Activated CD4-positive, alpha-beta memory T cell treated with anti-CD3 and anti-CD28 coated beads for 36 hours (primary cell): ENCODE measurements at regions of chr3 and their contacts with region 1.

Region 1: DNA sequence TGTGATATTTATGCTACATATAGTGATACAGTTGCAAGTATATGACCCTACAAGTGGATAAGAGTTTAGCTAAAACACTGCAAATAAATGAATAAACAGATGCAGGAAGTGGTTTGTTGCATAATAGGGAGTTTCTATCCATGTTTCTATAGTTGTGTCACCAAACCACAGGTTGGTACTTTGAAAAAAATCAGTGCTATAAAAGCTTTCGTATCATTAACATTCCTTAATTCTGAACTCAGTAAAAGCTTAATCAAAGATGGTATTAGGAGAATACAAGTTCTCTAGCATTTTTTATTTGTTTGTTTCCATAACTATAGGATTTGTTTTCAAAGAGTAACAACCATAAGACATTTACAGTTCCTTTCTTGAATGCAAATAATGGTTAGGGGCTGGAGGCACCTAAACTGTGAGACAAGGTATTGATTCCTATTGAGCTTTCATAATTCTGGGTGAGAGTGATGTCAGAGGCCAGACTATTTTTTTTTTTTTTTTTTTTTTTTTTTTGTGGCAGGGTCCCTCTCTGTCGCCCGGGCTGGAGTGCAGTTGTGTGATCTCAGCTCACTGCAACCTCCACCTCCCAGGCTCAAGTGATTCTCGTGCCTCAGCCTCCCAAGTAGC is 29.6 kb downstream of the CPOX start:
- DNase-seq: no peak
- H3K4me3 Mint-ChIP-seq: no peak overlapping the region
- H3K27ac Mint-ChIP-seq: peak overlapping the region; percentile 67
- H3K4me1 Mint-ChIP-seq: peaks cover 77% of the 10 kb centered on the region
- H3K27me3 Mint-ChIP-seq: peaks cover 3% of the 10 kb centered on the region

Region 2: GRCh38 chr3:98540346-98540745 is 23.4 kb before region 1 on chr3:
- CTCF ChIA-PET with region 1: interaction called, 15 read pairs
- POLR2A ChIA-PET with region 1: interaction called, 20 read pairs
- intact Hi-C with region 1: loop called (anchors 1 kb)
- DNase-seq: no peak
- H3K4me3 Mint-ChIP-seq: no peak overlapping the region
- H3K27ac Mint-ChIP-seq: peak overlapping the region; percentile 69
- H3K4me1 Mint-ChIP-seq: peaks cover 57% of the 10 kb centered on the region
- H3K27me3 Mint-ChIP-seq: no peaks in the 10 kb centered on the region

Region 3: DNA sequence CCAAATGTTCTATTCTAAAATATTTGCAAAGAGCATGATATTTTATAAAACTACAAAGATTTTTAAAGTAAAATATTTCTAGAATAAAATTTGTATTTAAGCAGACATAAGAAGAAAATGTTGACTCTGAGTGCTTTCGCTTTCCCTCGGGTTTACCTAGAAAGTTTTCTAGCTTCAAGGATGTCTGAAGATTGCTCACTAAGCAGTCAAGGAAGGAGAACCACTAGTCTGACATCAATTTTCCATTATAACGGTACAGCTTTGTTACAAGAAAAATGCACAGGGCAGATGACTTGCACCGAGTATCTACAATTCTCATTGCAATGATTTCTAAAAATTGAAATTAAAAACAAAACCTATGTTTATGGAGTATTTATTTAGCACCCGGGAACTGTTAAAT is 17.8 kb before region 1 on chr3:
- CTCF ChIA-PET with region 1: interaction called, 4 read pairs
- POLR2A ChIA-PET with region 1: interaction called, 4 read pairs
- intact Hi-C with region 1: loop called (anchors 1 kb)
- DNase-seq: no peak
- H3K4me3 Mint-ChIP-seq: peak overlapping the region; percentile 64
- H3K27ac Mint-ChIP-seq: peak overlapping the region; percentile 78
- H3K4me1 Mint-ChIP-seq: peaks cover 47% of the 10 kb centered on the region
- H3K27me3 Mint-ChIP-seq: no peaks in the 10 kb centered on the region

Region 4: DNA sequence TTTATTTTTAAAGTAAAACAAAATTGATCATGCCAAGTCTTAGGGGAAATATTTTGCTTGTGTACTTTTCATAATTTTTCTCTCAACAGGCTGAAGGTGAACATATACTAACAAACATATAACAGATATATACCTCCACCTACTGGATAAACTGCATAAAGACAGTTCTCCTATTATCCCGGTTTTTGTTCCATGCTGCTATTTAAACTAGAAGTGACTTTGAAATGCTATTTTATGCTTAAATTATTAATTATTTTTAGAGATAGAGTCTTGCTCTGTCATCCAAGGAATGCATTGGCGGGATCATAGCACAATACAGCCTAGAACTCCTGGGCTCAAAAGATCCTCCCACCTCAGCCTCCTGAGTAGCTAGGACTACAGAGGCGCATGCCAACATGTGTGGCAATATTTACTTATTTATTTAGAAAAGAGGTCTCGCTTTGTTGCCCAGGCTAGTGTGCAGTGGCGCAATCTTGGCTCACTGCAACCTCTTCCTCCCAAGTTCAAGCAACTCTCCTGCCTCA is 249.1 kb after region 1 on chr3:
- CTCF ChIA-PET with region 1: no interaction called
- POLR2A ChIA-PET with region 1: no interaction called
- intact Hi-C with region 1: no loop called
- DNase-seq: no peak
- H3K4me3 Mint-ChIP-seq: no peak overlapping the region
- H3K27ac Mint-ChIP-seq: no peak overlapping the region
- H3K4me1 Mint-ChIP-seq: no peaks in the 10 kb centered on the region
- H3K27me3 Mint-ChIP-seq: no peaks in the 10 kb centered on the region

Region 5: GRCh38 chr3:99875929-99876841 is 1312.4 kb after region 1 on chr3:
- CTCF ChIA-PET with region 1: no interaction called
- POLR2A ChIA-PET with region 1: no interaction called
- intact Hi-C with region 1: loop called (anchors 10 kb)
- DNase-seq: peak; percentile 73
- H3K4me3 Mint-ChIP-seq: peak overlapping the region; percentile 65
- H3K27ac Mint-ChIP-seq: no peak overlapping the region
- H3K4me1 Mint-ChIP-seq: peaks cover 27% of the 10 kb centered on the region
- H3K27me3 Mint-ChIP-seq: peaks cover 2% of the 10 kb centered on the region